ENCODE measurements at regions of chr9 and their contacts with region 1.

Region 1: DNA sequence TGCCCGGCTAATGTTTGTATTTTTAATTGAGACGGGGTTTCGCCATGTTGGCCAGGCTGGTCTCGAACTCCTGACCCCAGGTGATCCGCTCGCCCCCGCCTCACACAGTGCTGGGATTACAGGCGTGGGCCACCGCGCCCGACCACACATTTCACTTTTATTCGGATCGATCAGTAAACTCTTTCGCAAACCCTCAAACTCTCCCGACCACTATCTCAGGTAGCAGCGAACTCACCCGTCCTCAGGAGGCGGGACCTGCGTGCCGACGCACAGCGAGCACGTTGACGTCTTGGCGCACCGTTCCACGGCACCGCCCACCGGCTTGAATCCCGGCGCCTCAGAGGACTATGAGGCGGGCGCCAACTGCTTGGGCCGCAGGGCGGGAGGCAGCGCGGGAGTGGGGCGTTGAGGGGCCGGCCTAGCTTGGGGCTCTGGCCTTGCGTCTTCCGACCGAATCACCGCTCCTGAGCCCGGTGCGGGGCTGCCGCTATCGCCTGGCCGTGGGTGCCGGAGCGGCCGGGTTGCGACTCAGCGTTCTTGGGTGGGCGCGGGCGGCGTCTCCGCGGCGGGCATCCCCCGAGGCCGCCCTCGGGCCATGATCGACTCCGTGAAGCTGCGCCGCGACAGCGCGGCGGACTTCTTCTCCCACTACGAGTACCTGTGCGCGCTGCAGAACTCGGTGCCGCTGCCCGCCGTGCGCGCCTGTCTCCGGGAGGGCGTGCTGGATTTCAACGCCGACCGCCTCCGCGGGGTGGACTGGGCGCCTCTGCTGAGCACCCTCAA is at the start of gene CEP78:
- DNase-seq: peak; percentile 67 to 88 (median 81)
- ATAC-seq: peak; percentile 96
- H3K4me3 ChIP-seq: peak within 1 kb of the TSS; percentile 86
- H3K4me3 Mint-ChIP-seq: peak within 1 kb of the TSS in 4 of 10 donors; percentile 74 to 98 (median 98)
- H3K27ac ChIP-seq: peak within 1 kb of the TSS; percentile 72
- H3K27ac Mint-ChIP-seq: peak within 1 kb of the TSS; percentile 91 to 98 (median 95)
- H3K4me1 ChIP-seq: peaks cover 5 to 12% of the 10 kb centered on the region in 2 donors
- H3K4me1 Mint-ChIP-seq: peaks cover 28 to 46% (median 40%) of the 10 kb centered on the region in 7 donors
- H3K27me3 ChIP-seq: no peaks in the 10 kb centered on the region
- H3K27me3 Mint-ChIP-seq: peaks cover 0 to 3% (median 0%) of the 10 kb centered on the region in 5 donors
- total RNA-seq, gene CEP78: 14.7 to 34.8 (median 23.1) TPM

Region 2: GRCh38 chr9:78130004-78130403 is 105.9 kb before region 1 on chr9:
- CTCF ChIA-PET with region 1: no interaction called
- POLR2A ChIA-PET with region 1: no interaction called
- intact Hi-C with region 1: loop called in 1 of 2 experiments (anchors 1 kb)
- DNase-seq: no peak
- ATAC-seq: no peak
- H3K4me3 ChIP-seq: no peak overlapping the region
- H3K4me3 Mint-ChIP-seq: no peak overlapping the region
- H3K27ac ChIP-seq: no peak overlapping the region
- H3K27ac Mint-ChIP-seq: no peak overlapping the region
- H3K4me1 ChIP-seq: peaks cover 6 to 11% of the 10 kb centered on the region in 2 donors
- H3K4me1 Mint-ChIP-seq: peaks cover 9 to 22% (median 17%) of the 10 kb centered on the region in 7 donors
- H3K27me3 ChIP-seq: no peaks in the 10 kb centered on the region
- H3K27me3 Mint-ChIP-seq: peaks cover 0 to 17% (median 0%) of the 10 kb centered on the region in 5 donors

Region 3: GRCh38 chr9:78196258-78196657 is 39.7 kb before region 1 on chr9:
- CTCF ChIA-PET with region 1: no interaction called
- POLR2A ChIA-PET with region 1: no interaction called
- intact Hi-C with region 1: loop called (anchors 1 kb)
- DNase-seq: no peak
- ATAC-seq: peak; percentile 32
- H3K4me3 ChIP-seq: no peak overlapping the region
- H3K4me3 Mint-ChIP-seq: no peak overlapping the region
- H3K27ac ChIP-seq: no peak overlapping the region
- H3K27ac Mint-ChIP-seq: peak overlapping the region in 4 of 9 donors; percentile 3 to 70 (median 16)
- H3K4me1 ChIP-seq: peaks cover 9 to 11% of the 10 kb centered on the region in 2 donors
- H3K4me1 Mint-ChIP-seq: peaks cover 12 to 25% (median 20%) of the 10 kb centered on the region in 7 donors
- H3K27me3 ChIP-seq: no peaks in the 10 kb centered on the region
- H3K27me3 Mint-ChIP-seq: peaks cover 0 to 13% (median 0%) of the 10 kb centered on the region in 5 donors

Measured in naive thymus-derived CD4-positive, alpha-beta T cell (primary cell).